ENCODE measurements at regions of chr7 and their contacts with region 1.

Region 1: DNA sequence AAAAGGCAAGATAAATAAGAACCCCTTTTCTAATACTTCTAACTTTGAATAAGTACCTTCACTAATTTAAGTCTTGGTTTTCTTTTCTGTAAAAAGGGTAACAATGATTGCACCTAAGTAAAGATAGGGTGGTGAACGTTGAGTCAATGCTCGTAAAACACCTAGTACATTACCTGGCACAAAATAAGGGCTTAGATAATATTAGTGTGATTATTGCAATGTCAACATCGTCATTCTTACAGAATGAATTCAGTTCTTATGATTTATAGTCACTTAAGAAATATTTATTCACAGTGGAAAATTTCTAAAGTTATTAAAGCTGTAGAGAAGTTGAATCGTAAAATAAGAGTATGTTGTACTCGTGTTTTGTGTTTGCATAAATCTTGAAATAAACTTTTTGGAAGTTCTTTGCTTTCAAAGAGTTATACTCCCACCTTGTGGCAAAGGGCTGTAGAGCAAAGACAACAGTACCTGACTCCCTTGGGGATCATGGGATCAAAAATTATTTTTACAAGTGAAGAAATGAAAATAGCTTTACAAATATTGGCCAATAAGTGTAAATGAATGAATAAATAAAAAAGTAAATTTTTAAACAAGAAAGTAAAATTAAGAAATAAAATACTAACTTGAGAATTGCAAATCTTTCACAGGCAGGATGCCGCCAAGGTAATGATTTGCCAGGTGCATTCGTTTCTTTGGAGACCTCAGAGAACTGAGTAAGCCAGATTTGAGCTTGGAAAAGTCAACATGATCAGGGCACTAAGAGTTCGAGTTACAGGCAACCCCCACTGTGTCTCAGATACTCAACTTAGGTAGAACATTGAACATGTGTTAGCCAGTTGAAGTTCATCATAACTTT is 285.8 kb upstream of the CACNA2D1 start:
- DNase-seq: peak in 3 of 9 donors; percentile 4 to 11 (median 11)
- ATAC-seq: no peak
- H3K4me3 ChIP-seq: no peak overlapping the region
- H3K4me3 Mint-ChIP-seq: no peak overlapping the region
- H3K27ac ChIP-seq: no peak overlapping the region
- H3K27ac Mint-ChIP-seq: no peak overlapping the region
- H3K4me1 ChIP-seq: no peaks in the 10 kb centered on the region
- H3K4me1 Mint-ChIP-seq: peaks cover 0 to 2% (median 0%) of the 10 kb centered on the region in 7 donors
- H3K27me3 ChIP-seq: no peaks in the 10 kb centered on the region
- H3K27me3 Mint-ChIP-seq: no peaks in the 10 kb centered on the region

Region 2: DNA sequence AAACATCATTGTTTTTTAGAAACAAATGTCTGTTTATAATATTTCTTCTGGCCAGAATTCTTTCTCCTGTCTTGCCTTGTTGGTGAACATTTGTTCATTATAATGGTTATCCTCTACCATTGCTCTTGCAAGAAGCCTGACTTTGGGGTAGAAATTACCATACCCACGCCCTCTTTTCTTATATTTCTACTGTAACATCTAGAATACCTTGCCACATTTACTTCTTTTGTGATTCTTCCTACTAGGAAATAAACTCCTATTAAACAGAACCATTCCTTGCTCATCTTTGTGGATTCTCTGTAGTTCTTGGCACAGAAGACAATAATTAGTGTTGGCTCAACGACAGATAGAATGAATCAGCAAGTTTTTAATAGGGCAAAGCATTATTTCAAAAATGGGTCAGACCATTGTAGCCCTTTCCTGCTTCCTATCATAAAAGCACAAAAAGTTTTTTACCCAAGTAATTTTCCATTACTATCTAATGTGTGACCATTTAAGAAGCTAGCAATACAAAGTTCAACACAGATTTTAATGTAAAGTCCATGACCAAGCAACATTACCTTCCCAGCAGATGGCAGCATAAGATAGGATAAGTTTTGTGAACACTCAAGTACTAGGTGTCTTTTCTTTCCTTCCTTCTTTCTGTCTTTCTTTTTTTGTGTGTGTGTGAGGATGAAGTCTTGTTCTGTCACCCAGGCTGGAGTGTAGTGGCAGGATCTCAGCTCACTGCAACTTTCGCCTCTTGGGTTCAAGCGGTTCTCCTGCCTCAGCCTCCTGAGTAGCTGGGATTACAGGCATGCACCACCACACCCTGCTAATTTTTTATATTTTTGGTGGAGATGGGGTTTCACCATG is 1229.9 kb before region 1 on chr7:
- CTCF ChIA-PET with region 1: no interaction called
- POLR2A ChIA-PET with region 1: no interaction called
- intact Hi-C with region 1: loop called (anchors 5 kb)
- DNase-seq: no peak
- ATAC-seq: no peak
- H3K4me3 ChIP-seq: no peak overlapping the region
- H3K4me3 Mint-ChIP-seq: no peak overlapping the region
- H3K27ac ChIP-seq: no peak overlapping the region
- H3K27ac Mint-ChIP-seq: no peak overlapping the region
- H3K4me1 ChIP-seq: no peaks in the 10 kb centered on the region
- H3K4me1 Mint-ChIP-seq: no peaks in the 10 kb centered on the region
- H3K27me3 ChIP-seq: no peaks in the 10 kb centered on the region
- H3K27me3 Mint-ChIP-seq: no peaks in the 10 kb centered on the region

Region 3: GRCh38 chr7:82234457-82235049 is 494.8 kb before region 1 on chr7:
- CTCF ChIA-PET with region 1: no interaction called
- POLR2A ChIA-PET with region 1: no interaction called
- intact Hi-C with region 1: loop called in 1 of 2 experiments (anchors 2 kb)
- DNase-seq: no peak
- ATAC-seq: no peak
- H3K4me3 ChIP-seq: no peak overlapping the region
- H3K4me3 Mint-ChIP-seq: no peak overlapping the region
- H3K27ac ChIP-seq: no peak overlapping the region
- H3K27ac Mint-ChIP-seq: no peak overlapping the region
- H3K4me1 ChIP-seq: no peaks in the 10 kb centered on the region
- H3K4me1 Mint-ChIP-seq: no peaks in the 10 kb centered on the region
- H3K27me3 ChIP-seq: no peaks in the 10 kb centered on the region
- H3K27me3 Mint-ChIP-seq: no peaks in the 10 kb centered on the region

Region 4: DNA sequence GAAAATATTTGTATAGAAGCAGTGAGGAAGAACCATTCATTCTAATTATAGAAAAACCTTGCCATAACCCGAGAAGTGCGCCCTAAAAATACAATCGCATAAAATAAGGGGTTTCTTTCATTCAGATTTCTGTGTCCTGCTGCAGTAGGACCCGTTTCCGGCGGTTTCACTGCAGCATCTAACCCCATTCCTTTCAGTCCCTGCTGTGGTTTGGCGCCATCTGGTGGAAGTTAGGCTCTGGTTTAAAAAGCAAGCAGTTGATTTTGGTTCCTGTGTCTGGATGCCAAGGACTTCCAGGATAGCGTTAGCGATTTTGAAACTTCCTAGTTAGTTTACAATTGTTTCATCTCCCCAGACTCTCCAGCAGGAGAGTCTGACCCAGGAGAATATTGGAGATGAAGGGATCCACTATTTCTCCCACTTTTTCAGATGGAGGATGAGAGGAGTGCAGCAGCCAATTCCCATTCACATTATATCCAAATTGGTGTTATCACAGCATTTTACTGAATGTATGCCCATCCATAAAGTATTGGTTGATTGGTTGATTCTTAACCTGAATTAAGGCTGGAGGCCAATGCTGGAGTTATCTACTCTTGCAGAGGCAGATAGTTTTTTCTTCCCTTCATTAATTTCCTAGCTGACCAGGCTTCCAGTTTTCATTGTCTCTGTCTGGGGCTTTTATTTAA is 157.1 kb before region 1 on chr7:
- CTCF ChIA-PET with region 1: no interaction called
- POLR2A ChIA-PET with region 1: no interaction called
- intact Hi-C with region 1: loop called (anchors 1 kb)
- DNase-seq: peak; percentile 17 to 64 (median 30)
- ATAC-seq: peak; percentile 68
- H3K4me3 ChIP-seq: no peak overlapping the region
- H3K4me3 Mint-ChIP-seq: no peak overlapping the region
- H3K27ac ChIP-seq: no peak overlapping the region
- H3K27ac Mint-ChIP-seq: no peak overlapping the region
- H3K4me1 ChIP-seq: no peaks in the 10 kb centered on the region
- H3K4me1 Mint-ChIP-seq: peaks cover 0 to 2% (median 0%) of the 10 kb centered on the region in 7 donors
- H3K27me3 ChIP-seq: no peaks in the 10 kb centered on the region
- H3K27me3 Mint-ChIP-seq: peaks cover 0 to 9% (median 0%) of the 10 kb centered on the region in 5 donors

Region 5: DNA sequence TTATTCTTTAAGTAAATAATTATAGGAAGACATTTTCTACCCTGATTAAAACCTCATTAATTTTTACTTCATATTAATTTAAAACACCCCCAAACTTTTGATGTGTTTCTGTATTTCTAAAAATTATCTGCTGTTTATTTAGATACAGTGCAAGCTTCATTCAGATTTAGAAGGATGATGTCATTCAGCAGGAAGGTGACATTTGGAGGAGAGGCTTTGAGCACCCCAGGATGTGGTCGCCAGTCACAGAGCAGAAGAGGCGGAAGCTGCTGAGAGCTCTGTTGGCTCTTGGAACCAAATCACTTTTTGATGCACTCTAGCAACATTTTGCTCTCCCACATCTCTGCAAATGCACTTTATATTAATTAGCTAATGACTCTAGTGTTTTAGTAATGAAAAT is 51.9 kb before region 1 on chr7:
- CTCF ChIA-PET with region 1: no interaction called
- POLR2A ChIA-PET with region 1: no interaction called
- intact Hi-C with region 1: loop called (anchors 5 kb)
- DNase-seq: peak in 8 of 9 donors; percentile 26 to 65 (median 52)
- ATAC-seq: peak; percentile 93
- H3K4me3 ChIP-seq: no peak overlapping the region
- H3K4me3 Mint-ChIP-seq: peak overlapping the region in 7 of 10 donors; percentile 29 to 59 (median 43)
- H3K27ac ChIP-seq: no peak overlapping the region
- H3K27ac Mint-ChIP-seq: peak overlapping the region in 8 of 9 donors; percentile 26 to 89 (median 76)
- H3K4me1 ChIP-seq: peaks cover 0 to 21% of the 10 kb centered on the region in 2 donors
- H3K4me1 Mint-ChIP-seq: peaks cover 7 to 36% (median 22%) of the 10 kb centered on the region in 7 donors
- H3K27me3 ChIP-seq: no peaks in the 10 kb centered on the region
- H3K27me3 Mint-ChIP-seq: no peaks in the 10 kb centered on the region

Measured in naive thymus-derived CD4-positive, alpha-beta T cell (primary cell).